MCF 10A (cell line): ENCODE measurements at regions of chr7 and their contacts with region 1.

Region 1: GRCh38 chr7:116809636-116810266 is 52.6 kb upstream of the CAPZA2 start:
- DNase-seq: peak; percentile 77
- H3K4me3 Mint-ChIP-seq: no peak overlapping the region
- H3K27ac Mint-ChIP-seq: peak overlapping the region; percentile 75
- H3K4me1 Mint-ChIP-seq: peaks cover 19% of the 10 kb centered on the region
- H3K27me3 Mint-ChIP-seq: no peaks in the 10 kb centered on the region
- CTCF ChIP-seq: peak; percentile 64

Region 2: GRCh38 chr7:116598278-116598677 is 211.5 kb before region 1 on chr7:
- CTCF ChIA-PET with region 1: interaction called, 205 read pairs
- POLR2A ChIA-PET with region 1: interaction called, 3 read pairs
- intact Hi-C with region 1: loop called (anchors 1 kb)
- DNase-seq: peak; percentile 56
- H3K4me3 Mint-ChIP-seq: no peak overlapping the region
- H3K27ac Mint-ChIP-seq: no peak overlapping the region
- H3K4me1 Mint-ChIP-seq: no peaks in the 10 kb centered on the region
- H3K27me3 Mint-ChIP-seq: no peaks in the 10 kb centered on the region
- CTCF ChIP-seq: peak; percentile 75

Region 3: GRCh38 chr7:117072620-117073118 is 262.9 kb after region 1 on chr7:
- CTCF ChIA-PET with region 1: no interaction called
- POLR2A ChIA-PET with region 1: no interaction called
- intact Hi-C with region 1: no loop called
- DNase-seq: peak; percentile 49
- H3K4me3 Mint-ChIP-seq: no peak overlapping the region
- H3K27ac Mint-ChIP-seq: no peak overlapping the region
- H3K4me1 Mint-ChIP-seq: peaks cover 10% of the 10 kb centered on the region
- H3K27me3 Mint-ChIP-seq: no peaks in the 10 kb centered on the region
- CTCF ChIP-seq: no peak